ENCODE measurements at regions of chr6 and their contacts with region 1.

Region 1: DNA sequence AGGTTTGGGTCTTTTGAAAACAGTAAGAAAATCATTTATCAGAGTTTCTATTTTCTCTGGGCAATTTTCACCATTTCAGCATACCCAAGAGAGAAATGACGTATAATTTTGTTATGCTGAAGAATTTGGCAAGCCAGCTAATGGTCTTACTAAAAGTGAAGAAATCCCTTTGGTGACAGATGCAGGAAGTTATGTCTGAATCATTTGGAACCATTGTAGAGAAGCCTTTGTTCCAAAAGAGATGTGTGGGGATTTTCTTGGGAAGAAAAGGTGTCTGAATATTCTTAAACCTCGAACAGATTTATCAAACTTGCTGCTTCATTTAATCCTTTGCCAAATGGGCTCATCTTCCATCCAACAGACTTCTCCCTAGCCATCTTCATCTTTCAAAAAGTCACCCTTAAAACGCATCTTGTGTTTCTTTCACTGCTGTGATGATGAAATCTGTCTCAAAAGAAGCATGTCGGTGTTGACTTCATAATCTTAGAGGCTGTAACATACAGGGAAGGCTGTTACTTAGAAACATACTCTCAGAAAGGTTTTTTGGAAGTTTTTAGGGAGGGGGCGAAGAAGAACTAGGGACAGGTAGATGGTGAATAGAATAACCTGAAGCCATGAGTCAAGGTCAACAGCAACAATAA is 39.5 kb downstream of the CITED2 start:
- DNase-seq: peak; percentile 80 to 94 (median 91)
- H3K4me3 ChIP-seq: peak overlapping the region in 1 of 3 experiments; percentile 10
- H3K4me3 Mint-ChIP-seq: no peak overlapping the region
- H3K27ac ChIP-seq: peak overlapping the region in 1 of 2 donors; percentile 91
- H3K27ac Mint-ChIP-seq: peak overlapping the region; percentile 92 to 99 (median 97)
- H3K4me1 ChIP-seq: peaks cover 52 to 60% of the 10 kb centered on the region in 2 donors
- H3K4me1 Mint-ChIP-seq: peaks cover 63% of the 10 kb centered on the region
- H3K27me3 ChIP-seq: no peaks in the 10 kb centered on the region
- H3K27me3 Mint-ChIP-seq: peaks cover 0 to 2% (median 0%) of the 10 kb centered on the region in 3 donors
- CTCF ChIP-seq: no peak

Region 2: GRCh38 chr6:139060332-139060731 is 274.6 kb before region 1 on chr6:
- intact Hi-C with region 1: no loop called
- DNase-seq: no peak
- H3K4me3 ChIP-seq: no peak overlapping the region
- H3K4me3 Mint-ChIP-seq: no peak overlapping the region
- H3K27ac ChIP-seq: no peak overlapping the region
- H3K27ac Mint-ChIP-seq: no peak overlapping the region
- H3K4me1 ChIP-seq: no peaks in the 10 kb centered on the region
- H3K4me1 Mint-ChIP-seq: no peaks in the 10 kb centered on the region
- H3K27me3 ChIP-seq: no peaks in the 10 kb centered on the region
- H3K27me3 Mint-ChIP-seq: peaks cover 0 to 3% (median 2%) of the 10 kb centered on the region in 3 donors
- CTCF ChIP-seq: no peak

Region 3: DNA sequence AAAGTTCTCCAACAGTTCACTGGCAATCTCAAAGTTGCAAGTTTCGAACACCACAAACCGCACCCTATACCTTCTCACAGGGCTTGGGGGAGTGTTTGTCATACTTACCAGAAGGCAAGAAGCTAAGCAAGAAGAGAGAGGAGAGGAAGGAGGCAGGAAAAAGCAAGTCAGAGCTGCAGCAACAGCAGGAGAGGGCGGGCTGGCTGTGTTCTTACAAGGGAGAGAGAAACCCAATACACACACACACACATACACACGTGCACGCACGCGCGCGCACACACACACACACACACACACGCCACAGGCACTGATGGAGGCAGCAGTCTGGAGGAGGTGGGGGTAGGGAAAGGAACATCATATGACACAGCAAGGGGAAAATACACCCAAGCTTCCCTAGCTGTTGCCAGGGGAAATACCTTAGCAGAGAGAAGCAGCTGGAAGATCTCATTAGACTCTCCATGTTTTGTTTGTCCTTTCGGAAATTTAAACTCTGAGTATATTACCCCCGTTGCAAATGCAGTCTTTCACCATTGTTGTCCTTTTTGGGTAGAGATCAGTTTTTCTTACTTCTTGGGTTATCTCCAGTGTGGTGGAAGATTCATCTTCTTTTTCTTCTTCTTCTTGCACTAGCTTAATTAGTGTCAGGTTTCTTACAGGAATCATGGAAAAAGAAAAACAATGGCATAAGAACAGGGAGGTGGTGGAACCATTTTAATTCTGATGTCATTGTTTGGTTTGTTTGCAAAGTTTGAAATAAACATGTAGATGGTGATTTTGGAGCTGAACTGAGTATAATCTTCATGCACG is 42.9 kb before region 1 on chr6 and contains the start of gene TXLNB:
- intact Hi-C with region 1: loop called (anchors 5 kb)
- DNase-seq: peak; percentile 50 to 93 (median 59)
- H3K4me3 ChIP-seq: peak within 1 kb of the TSS in 2 of 3 experiments; percentile 38 to 56
- H3K4me3 Mint-ChIP-seq: peak within 1 kb of the TSS; percentile 68 to 84
- H3K27ac ChIP-seq: peak within 1 kb of the TSS; percentile 82 to 94
- H3K27ac Mint-ChIP-seq: peak within 1 kb of the TSS; percentile 96 to 98 (median 97)
- H3K4me1 ChIP-seq: peaks cover 43 to 51% of the 10 kb centered on the region in 2 donors
- H3K4me1 Mint-ChIP-seq: peaks cover 48% of the 10 kb centered on the region
- H3K27me3 ChIP-seq: no peaks in the 10 kb centered on the region
- H3K27me3 Mint-ChIP-seq: peaks cover 0 to 1% (median 0%) of the 10 kb centered on the region in 3 donors
- CTCF ChIP-seq: no peak
- polyA plus RNA-seq, gene TXLNB: 0.04 to 0.25 (median 0.14) TPM

Region 4: DNA sequence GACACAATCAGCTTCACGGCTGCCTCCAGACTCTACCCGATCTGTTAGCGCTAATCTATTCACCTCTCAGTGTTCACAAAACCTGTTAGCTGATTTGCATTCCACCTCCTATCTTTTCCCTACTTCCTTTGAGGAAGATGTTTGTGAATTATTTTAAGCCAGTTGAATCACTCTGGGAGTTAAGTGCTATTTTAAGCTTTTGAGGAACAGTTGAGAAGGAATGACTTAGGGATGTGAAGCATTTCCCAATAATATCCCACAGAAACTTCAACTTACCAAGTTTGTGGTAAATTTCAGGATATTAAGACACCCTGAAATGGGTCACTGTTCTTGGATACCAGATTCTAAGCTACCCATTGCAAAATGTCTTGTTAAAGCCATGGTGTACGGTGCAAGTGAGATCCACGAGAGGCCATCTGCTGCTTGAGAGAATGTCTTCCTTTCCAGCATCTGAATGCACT is 184.7 kb after region 1 on chr6:
- intact Hi-C with region 1: no loop called
- DNase-seq: no peak
- H3K4me3 ChIP-seq: no peak overlapping the region
- H3K4me3 Mint-ChIP-seq: no peak overlapping the region
- H3K27ac ChIP-seq: no peak overlapping the region
- H3K27ac Mint-ChIP-seq: no peak overlapping the region
- H3K4me1 ChIP-seq: peaks cover 16 to 25% of the 10 kb centered on the region in 2 donors
- H3K4me1 Mint-ChIP-seq: peaks cover 37% of the 10 kb centered on the region
- H3K27me3 ChIP-seq: no peaks in the 10 kb centered on the region
- H3K27me3 Mint-ChIP-seq: peaks cover 0 to 3% (median 0%) of the 10 kb centered on the region in 3 donors
- CTCF ChIP-seq: no peak